ENCODE measurements at regions of chr2 and their contacts with region 1.

Region 1: GRCh38 chr2:16756831-16757644 is 91.4 kb upstream of the CYRIA start:
- DNase-seq: peak; percentile 76 to 80
- H3K4me3 ChIP-seq: no peak overlapping the region
- H3K4me1 ChIP-seq: no peaks in the 10 kb centered on the region
- H3K27me3 ChIP-seq: peaks cover 4% of the 10 kb centered on the region; the same call in 1 of the 2 replicates

Region 2: DNA sequence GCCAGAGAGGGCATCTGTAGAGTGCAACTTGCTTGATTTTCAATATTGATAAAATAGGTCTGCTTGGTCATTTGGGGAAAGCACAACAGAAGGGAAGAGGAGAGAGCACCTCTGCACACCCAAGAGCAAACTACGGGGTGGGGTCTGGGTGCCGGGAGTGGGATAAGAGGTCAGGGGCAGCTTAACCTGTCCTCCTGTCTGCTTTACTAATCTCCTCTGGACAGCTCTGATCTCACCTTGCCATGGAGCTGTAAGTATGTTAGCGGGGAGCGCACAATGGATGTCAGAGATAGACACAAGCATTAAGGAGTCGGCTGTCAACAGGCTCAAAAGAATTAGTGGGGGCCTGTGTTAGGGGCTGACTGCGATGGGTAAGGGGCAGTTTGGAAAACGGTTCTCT is 420.1 kb before region 1 on chr2:
- in situ Hi-C with region 1: no loop called
- DNase-seq: no peak
- H3K4me3 ChIP-seq: no peak overlapping the region
- H3K4me1 ChIP-seq: no peaks in the 10 kb centered on the region
- H3K27me3 ChIP-seq: no peaks in the 10 kb centered on the region

Region 3: DNA sequence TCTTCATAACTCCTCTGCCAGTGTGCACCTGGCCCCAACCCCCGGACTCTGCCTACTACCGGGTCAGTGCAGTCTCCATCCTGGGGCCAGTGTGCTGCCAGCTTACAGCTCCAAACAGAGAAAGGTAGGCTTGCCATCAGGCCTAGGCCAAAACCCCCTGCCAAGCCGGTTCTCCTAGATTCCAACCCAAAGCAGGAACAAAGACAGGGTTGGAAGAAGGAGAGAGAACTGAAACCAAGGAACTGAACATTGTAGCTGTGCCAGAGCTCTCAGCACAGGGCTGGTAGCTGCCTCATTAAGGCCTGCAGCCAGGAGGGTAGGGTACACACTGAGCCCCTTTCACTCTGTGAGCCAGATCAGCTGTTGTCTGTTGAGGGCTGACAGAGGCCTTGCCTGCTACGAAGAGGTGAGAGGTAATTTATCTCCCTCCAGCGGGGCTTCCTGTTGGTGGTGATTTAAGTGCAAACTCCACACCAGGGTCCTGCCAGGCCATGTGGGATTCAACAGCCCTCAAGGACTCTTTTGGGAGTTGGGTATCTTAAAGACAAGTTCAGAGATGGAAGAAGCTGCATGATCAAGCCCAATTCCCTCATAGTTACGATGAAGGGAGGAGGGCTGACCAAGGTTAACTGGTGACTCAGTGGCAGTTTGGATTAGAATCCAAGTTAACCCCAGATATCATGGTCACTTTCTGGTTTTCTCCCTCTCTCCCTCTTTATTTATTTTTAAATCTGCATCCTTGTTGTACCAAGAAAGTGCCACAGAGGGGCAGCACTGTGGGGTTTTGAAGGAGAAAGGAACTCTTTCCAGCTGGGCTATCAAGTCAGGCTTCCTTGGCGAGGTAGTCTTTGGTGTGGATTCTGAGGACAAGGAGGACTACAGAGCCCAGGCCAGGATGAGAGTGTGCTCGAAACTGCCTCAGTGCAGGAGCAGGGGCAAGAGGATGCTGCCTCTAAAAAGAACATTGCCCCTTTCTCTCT is 139.5 kb before region 1 on chr2:
- in situ Hi-C with region 1: loop called (anchors 5 kb)
- DNase-seq: peak in 1 of 2 experiments; percentile 48
- H3K4me3 ChIP-seq: no peak overlapping the region
- H3K4me1 ChIP-seq: no peaks in the 10 kb centered on the region
- H3K27me3 ChIP-seq: no peaks in the 10 kb centered on the region

Region 4: GRCh38 chr2:17615728-17616351 is 858.8 kb after region 1 on chr2:
- in situ Hi-C with region 1: no loop called
- DNase-seq: no peak
- H3K4me3 ChIP-seq: no peak overlapping the region
- H3K4me1 ChIP-seq: peaks cover 6% of the 10 kb centered on the region
- H3K27me3 ChIP-seq: no peaks in the 10 kb centered on the region

Measured in HAP-1 (cell line).